H1 (cell line): ENCODE measurements at regions of chr16 and their contacts with region 1.

Region 1: GRCh38 chr16:19502395-19503131 is 19.3 kb downstream of the GDE1 start:
- DNase-seq: peak in 1 of 2 experiments; percentile 83
- H3K4me3 ChIP-seq: no peak overlapping the region
- H3K27ac ChIP-seq: no peak overlapping the region
- H3K4me1 ChIP-seq: no peaks in the 10 kb centered on the region
- H3K27me3 ChIP-seq: no peaks in the 10 kb centered on the region
- CTCF ChIP-seq: peak in 2 of 3 experiments; percentile 70 to 79; a peak in 3 of 4 replicates
- EP300 ChIP-seq: no peak
- POLR2A ChIP-seq: no peak
- RAD21 ChIP-seq: peak; percentile 80 to 92

Region 2: GRCh38 chr16:19086322-19087199 is 416.0 kb before region 1 on chr16:
- CTCF ChIA-PET with region 1: interaction called, 15 read pairs
- POLR2A ChIA-PET with region 1: no interaction called
- DNase-seq: peak; percentile 58 to 96
- H3K4me3 ChIP-seq: peak overlapping the region in 3 of 4 experiments; percentile 28 to 53 (median 42); a peak in 5 of 8 replicates
- H3K27ac ChIP-seq: no peak overlapping the region
- H3K4me1 ChIP-seq: no peaks in the 10 kb centered on the region; a peak in 1 of 7 replicates
- H3K27me3 ChIP-seq: peaks cover 0 to 10% (median 7%) of the 10 kb centered on the region in 4 experiments; a peak in 5 of 7 replicates
- CTCF ChIP-seq: peak; percentile 79 to 96 (median 88)
- EP300 ChIP-seq: no peak
- POLR2A ChIP-seq: no peak
- RAD21 ChIP-seq: peak; percentile 93 to 98

Region 3: GRCh38 chr16:19382887-19383816 is 119.4 kb before region 1 on chr16:
- CTCF ChIA-PET with region 1: interaction called, 113 read pairs
- POLR2A ChIA-PET with region 1: no interaction called
- DNase-seq: no peak
- H3K4me3 ChIP-seq: no peak overlapping the region
- H3K27ac ChIP-seq: no peak overlapping the region
- H3K4me1 ChIP-seq: no peaks in the 10 kb centered on the region
- H3K27me3 ChIP-seq: no peaks in the 10 kb centered on the region
- CTCF ChIP-seq: no peak
- EP300 ChIP-seq: no peak
- POLR2A ChIP-seq: no peak
- RAD21 ChIP-seq: no peak

Region 4: DNA sequence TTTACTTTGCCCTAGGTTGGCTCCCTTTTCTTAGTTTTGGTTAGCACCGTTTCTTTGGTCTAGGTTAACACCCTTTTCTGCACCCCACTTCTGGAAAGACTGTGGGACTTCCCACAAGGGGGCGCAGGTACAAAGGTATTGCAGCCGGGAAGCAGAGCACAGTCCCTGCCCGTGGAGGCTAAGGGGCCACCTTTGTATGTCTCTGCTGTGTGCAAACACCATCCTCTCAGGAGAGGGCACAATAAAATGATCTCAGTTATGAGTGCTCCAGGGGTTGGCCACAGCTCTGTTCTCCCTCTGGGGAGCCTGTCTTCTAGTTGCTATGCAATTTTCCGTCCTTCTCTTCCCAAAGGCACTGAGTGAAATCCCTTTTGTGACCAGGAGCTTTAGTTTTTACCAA is 113.3 kb before region 1 on chr16:
- CTCF ChIA-PET with region 1: interaction called, 113 read pairs
- POLR2A ChIA-PET with region 1: interaction called, 4 read pairs
- DNase-seq: peak in 1 of 2 experiments; percentile 88
- H3K4me3 ChIP-seq: no peak overlapping the region
- H3K27ac ChIP-seq: no peak overlapping the region
- H3K4me1 ChIP-seq: no peaks in the 10 kb centered on the region
- H3K27me3 ChIP-seq: no peaks in the 10 kb centered on the region
- CTCF ChIP-seq: peak; percentile 71 to 86 (median 83)
- EP300 ChIP-seq: no peak
- POLR2A ChIP-seq: no peak
- RAD21 ChIP-seq: peak; percentile 85 to 89

Region 5: GRCh38 chr16:19400697-19401096 is 101.9 kb before region 1 on chr16:
- CTCF ChIA-PET with region 1: interaction called, 16 read pairs
- POLR2A ChIA-PET with region 1: interaction called, 4 read pairs
- DNase-seq: peak; percentile 15 to 55
- H3K4me3 ChIP-seq: no peak overlapping the region
- H3K27ac ChIP-seq: no peak overlapping the region
- H3K4me1 ChIP-seq: no peaks in the 10 kb centered on the region
- H3K27me3 ChIP-seq: no peaks in the 10 kb centered on the region; a peak in 1 of 7 replicates
- CTCF ChIP-seq: peak; percentile 47 to 56 (median 53)
- EP300 ChIP-seq: no peak
- POLR2A ChIP-seq: no peak
- RAD21 ChIP-seq: peak; percentile 73 to 74

Region 6: GRCh38 chr16:19406866-19407491 is 95.6 kb before region 1 on chr16:
- CTCF ChIA-PET with region 1: interaction called, 13 read pairs
- POLR2A ChIA-PET with region 1: no interaction called
- DNase-seq: peak in 1 of 2 experiments; percentile 21
- H3K4me3 ChIP-seq: peak overlapping the region in 1 of 4 experiments; percentile 14; a peak in 2 of 8 replicates
- H3K27ac ChIP-seq: no peak overlapping the region
- H3K4me1 ChIP-seq: peaks cover 0 to 3% (median 2%) of the 10 kb centered on the region in 4 experiments; a peak in 4 of 7 replicates
- H3K27me3 ChIP-seq: peaks cover 0 to 12% (median 5%) of the 10 kb centered on the region in 4 experiments; a peak in 4 of 7 replicates
- CTCF ChIP-seq: no peak
- EP300 ChIP-seq: no peak
- POLR2A ChIP-seq: no peak
- RAD21 ChIP-seq: no peak

Region 7: DNA sequence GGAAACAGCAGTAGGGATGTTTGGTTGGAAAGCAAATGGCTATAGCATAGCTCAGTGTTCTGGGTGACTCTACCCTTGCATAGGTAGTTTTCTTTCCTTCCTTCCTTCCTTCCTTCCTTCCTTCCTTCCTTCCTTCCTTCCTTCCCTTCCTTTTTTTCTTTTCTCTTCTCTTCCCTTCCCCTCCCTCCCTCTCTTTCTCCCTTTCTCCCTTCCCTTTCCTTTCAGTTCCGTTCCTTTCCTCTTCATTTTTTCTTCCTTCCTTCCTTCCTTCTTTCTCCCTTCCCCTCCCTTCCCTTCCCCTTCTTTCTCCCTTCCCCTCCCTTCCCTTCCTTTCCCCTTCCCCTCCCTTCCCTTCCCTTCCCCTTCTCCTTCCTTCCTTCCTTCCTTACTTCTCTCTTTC is 11.9 kb before region 1 on chr16:
- CTCF ChIA-PET with region 1: interaction called, 13 read pairs
- POLR2A ChIA-PET with region 1: no interaction called
- DNase-seq: no peak
- H3K4me3 ChIP-seq: no peak overlapping the region
- H3K27ac ChIP-seq: no peak overlapping the region
- H3K4me1 ChIP-seq: peaks cover 2 to 13% (median 7%) of the 10 kb centered on the region in 4 experiments; a peak in 4 of 7 replicates
- H3K27me3 ChIP-seq: no peaks in the 10 kb centered on the region
- CTCF ChIP-seq: no peak
- EP300 ChIP-seq: no peak
- POLR2A ChIP-seq: no peak
- RAD21 ChIP-seq: no peak